HEK293 (cell line): ENCODE measurements at regions of chr6 and their contacts with region 1.

Region 1: DNA sequence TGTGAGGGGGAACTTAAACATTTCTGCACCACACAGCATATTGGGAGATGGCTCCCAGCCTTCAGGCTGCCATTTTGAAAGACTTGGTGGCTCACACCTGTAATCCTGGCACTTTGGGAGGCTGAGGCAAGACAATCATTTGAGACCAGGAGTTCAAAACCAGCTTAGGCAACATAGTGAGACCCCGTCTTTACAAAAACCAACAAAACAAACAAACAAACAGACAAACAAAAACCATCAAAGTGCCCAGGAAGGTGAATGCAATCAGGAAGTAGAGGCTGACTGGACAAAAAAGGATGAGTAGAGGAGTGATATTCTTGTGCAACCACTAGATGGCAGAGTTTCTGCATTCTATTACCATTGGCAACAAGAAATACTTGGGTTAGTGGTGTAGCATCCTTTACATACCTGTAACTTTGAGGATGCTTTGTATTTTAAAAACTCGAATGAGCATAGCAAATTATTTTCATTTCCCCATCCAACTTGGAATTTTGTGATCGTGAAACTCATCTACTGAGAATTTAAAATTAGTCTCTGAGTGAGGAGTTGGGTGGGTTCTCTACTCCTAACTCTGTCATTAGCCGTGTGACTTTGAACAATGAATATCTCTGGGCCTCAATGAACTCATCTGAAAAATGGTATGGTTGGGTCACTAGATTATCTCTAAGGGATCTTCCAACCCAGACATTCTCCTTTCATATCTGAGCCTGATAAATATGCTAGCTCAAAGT is 84.4 kb downstream of the CRYBG1 start:
- H3K4me3 ChIP-seq: no peak overlapping the region
- H3K27ac ChIP-seq: no peak overlapping the region
- H3K4me1 ChIP-seq: peaks cover 6% of the 10 kb centered on the region; the same call in 1 of the 2 replicates
- CTCF ChIP-seq: peak; percentile 60

Region 2: DNA sequence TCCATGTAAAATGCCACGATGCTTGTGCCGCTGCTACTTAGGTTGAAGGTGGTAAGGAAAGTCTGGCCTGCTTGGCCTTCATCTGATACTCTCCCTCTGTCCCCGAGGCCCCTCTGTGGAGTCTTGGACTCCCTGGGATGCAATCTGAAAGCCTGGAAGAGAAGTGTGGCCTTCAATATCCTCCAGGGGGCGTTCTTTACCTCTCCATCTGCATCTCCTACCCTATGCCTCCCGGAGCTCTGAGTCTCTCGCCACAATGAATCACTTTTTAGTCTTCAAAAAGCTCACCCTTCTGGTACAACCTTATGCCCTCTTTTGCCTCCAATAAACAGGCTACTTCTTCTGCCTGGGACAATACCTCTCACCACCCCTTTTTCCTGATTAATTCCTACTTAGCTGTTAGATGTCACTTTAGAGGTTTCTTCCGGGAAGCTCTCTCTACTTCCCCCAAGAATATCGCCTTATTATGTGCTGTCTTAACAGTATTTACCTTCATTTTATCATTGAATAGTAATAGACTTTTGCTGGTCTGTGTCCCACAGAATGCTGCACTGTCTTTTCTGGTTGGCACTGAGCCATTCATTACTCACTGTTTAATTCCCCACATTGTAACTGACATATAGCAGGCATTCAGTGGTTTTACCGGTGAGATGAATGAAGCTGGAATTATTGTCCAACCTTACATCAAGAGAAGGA is 105.5 kb before region 1 on chr6:
- CTCF ChIA-PET with region 1: interaction called, 94 read pairs
- POLR2A ChIA-PET with region 1: no interaction called
- H3K4me3 ChIP-seq: peak overlapping the region; percentile 4; the same call in 1 of the 2 replicates
- H3K27ac ChIP-seq: no peak overlapping the region
- H3K4me1 ChIP-seq: no peaks in the 10 kb centered on the region
- CTCF ChIP-seq: peak; percentile 65

Region 3: GRCh38 chr6:106397431-106397830 is 47.5 kb before region 1 on chr6:
- CTCF ChIA-PET with region 1: no interaction called
- POLR2A ChIA-PET with region 1: no interaction called
- H3K4me3 ChIP-seq: no peak overlapping the region
- H3K27ac ChIP-seq: no peak overlapping the region
- H3K4me1 ChIP-seq: no peaks in the 10 kb centered on the region
- CTCF ChIP-seq: no peak

Region 4: GRCh38 chr6:106417572-106418147 is 27.3 kb before region 1 on chr6:
- CTCF ChIA-PET with region 1: interaction called, 13 read pairs
- POLR2A ChIA-PET with region 1: no interaction called
- H3K4me3 ChIP-seq: no peak overlapping the region
- H3K27ac ChIP-seq: no peak overlapping the region
- H3K4me1 ChIP-seq: 0 out of 2 replicates have a peak, but pooled peaks cover 2% of the 10 kb centered on the region
- CTCF ChIP-seq: no peak

Region 5: DNA sequence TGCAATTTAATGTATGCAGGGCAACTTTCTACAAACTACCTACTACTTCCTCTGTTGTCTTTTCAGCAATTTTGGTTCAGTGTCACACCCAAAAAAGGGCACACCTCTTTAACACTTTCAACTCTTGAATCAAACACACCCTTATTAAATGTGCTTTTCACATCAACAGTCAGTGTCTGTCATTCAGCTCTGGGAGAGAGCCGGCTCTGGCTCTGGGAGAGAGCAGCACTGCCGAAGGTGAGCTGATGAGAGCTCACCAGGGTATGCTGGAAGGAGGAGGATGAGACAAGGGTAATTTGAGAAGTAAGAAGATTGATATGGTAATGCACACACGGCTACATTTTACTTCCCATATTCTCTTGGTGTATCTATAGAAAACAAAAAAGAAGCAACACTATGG is 50.1 kb after region 1 on chr6:
- CTCF ChIA-PET with region 1: no interaction called
- POLR2A ChIA-PET with region 1: no interaction called
- H3K4me3 ChIP-seq: no peak overlapping the region
- H3K27ac ChIP-seq: no peak overlapping the region
- H3K4me1 ChIP-seq: no peaks in the 10 kb centered on the region
- CTCF ChIP-seq: no peak

Region 6: DNA sequence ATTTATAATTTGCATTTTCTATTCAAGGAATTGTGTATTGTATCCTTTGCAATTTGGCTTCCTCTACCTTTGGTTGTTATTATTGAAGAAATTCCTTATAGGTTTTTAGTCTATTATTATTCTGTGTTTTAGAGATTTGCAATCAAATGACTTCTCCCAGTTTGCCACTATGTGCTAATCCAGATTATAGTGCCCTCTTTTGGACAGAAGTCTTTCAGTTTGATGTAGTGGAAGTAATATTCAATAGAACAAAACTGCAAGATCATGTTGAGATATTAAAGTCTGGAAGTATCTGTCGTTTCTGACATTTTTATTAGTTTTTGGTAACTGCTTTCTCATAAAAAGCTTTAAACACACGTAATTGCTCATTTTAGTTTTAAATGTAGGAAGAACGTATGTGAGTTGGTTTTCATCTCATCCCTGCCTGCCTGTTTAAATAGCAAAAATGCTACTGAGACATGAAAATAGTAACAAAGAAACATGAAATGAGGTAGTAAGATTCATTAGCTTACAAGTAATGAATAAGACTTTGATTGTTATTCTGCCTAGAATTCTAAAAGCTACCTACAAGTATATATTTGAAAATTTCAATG is 111.5 kb after region 1 on chr6:
- CTCF ChIA-PET with region 1: interaction called, 291 read pairs
- POLR2A ChIA-PET with region 1: interaction called, 3 read pairs
- H3K4me3 ChIP-seq: no peak overlapping the region
- H3K27ac ChIP-seq: no peak overlapping the region
- H3K4me1 ChIP-seq: no peaks in the 10 kb centered on the region
- CTCF ChIP-seq: no peak

Region 7: GRCh38 chr6:106574741-106575458 is 130.0 kb after region 1 on chr6:
- CTCF ChIA-PET with region 1: interaction called, 29 read pairs
- POLR2A ChIA-PET with region 1: no interaction called
- H3K4me3 ChIP-seq: no peak overlapping the region
- H3K27ac ChIP-seq: no peak overlapping the region
- H3K4me1 ChIP-seq: no peaks in the 10 kb centered on the region
- CTCF ChIP-seq: no peak

Region 8: DNA sequence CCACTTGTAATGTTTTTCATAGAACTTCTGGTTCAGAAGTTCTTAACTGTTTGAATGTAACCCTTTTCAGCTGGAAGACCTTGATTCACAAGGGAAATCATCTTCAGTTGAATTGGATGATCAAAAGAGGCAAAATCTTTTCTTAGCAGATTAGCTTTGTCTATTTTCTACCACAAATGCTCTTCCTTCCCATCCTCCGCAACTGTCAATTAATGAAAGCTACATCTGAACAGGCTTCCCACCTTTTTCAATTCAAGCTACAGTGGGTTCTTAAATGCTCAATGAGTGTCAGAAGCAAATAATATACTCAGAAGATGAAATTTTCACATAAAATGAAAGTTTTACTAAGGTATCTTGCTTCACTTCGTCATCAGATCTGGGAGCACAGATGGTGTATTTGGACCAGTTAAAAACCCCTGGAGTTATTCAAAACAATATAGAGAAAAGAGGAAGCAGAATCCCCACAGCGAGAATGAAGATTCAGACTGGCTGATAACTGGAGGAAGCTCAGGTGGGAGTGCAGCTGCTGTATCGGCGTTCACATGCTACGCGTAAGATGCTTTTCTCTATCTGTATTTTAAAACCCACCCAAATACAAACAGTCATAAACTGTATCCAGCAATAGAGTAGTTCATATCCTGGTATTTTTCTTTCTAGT is 203.8 kb after region 1 on chr6:
- CTCF ChIA-PET with region 1: no interaction called
- POLR2A ChIA-PET with region 1: no interaction called
- H3K4me3 ChIP-seq: no peak overlapping the region
- H3K27ac ChIP-seq: no peak overlapping the region
- H3K4me1 ChIP-seq: no peaks in the 10 kb centered on the region
- CTCF ChIP-seq: no peak

Region 9: DNA sequence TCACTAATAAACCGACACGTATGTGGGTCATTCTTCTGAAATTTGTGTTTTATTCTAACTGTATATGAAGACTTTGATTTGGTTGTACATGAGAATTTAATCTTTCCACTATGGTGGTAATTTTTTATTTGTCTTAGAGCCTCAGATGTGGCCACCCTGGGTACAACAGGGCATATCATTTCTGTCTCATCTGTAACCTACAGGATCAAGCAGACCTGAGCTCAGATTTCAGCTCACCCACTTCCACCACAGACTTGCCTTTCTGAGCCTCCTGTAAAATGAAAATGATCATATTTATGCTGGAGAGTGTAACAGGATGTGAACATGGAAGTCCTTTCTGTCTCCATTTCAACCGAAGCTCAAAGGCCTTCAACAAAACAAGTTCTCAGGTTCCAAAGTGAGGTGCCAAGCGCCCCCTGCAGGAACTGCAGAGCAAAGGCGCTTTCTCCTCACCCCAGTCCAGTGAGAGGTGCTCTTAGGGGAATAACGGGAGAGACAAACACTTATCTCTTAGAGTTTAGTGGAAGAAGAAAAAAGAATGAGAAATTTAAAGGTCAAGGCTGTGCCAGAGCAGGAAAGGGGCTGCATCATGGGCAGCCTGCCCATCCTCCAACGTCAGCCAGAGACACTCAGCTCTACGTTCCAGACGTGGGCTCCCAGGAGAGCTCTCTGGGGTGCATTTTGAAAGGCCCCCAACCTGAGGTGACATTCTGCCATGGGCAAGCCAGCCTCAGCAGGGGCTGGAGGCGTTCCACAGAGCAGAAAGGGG is 552.6 kb after region 1 on chr6:
- CTCF ChIA-PET with region 1: interaction called, 32 read pairs
- POLR2A ChIA-PET with region 1: no interaction called
- H3K4me3 ChIP-seq: no peak overlapping the region
- H3K27ac ChIP-seq: no peak overlapping the region
- H3K4me1 ChIP-seq: no peaks in the 10 kb centered on the region
- CTCF ChIP-seq: peak; percentile 41; the same call in 1 of the 2 replicates